GM10248 (cell line): ENCODE measurements at regions of chr13 and their contacts with region 1.

Region 1: GRCh38 chr13:75445717-75446499 is 36.1 kb downstream of the TBC1D4 start:
- DNase-seq: no peak
- CTCF ChIP-seq: no peak

Region 2: DNA sequence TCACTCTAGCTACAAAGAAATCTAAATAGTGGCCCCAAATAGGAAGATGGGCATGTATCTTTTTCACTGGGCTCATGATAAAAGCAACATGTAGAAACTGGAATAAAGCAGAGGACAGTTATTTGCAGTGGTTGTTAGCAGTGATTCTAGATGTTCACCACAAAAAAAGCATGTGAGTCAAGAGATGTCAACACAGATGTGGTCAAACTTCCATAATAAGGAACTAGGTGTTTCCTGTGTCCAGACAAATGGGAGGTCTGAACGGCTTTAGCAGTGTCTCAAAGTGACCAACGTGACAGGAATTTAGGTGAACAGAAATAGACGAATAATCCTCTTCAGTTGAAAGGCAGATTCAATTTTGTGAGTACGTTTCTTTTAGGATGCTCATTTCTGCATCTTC is 126.7 kb before region 1 on chr13:
- CTCF ChIA-PET with region 1: no interaction called
- POLR2A ChIA-PET with region 1: no interaction called
- DNase-seq: no peak
- CTCF ChIP-seq: no peak

Region 3: DNA sequence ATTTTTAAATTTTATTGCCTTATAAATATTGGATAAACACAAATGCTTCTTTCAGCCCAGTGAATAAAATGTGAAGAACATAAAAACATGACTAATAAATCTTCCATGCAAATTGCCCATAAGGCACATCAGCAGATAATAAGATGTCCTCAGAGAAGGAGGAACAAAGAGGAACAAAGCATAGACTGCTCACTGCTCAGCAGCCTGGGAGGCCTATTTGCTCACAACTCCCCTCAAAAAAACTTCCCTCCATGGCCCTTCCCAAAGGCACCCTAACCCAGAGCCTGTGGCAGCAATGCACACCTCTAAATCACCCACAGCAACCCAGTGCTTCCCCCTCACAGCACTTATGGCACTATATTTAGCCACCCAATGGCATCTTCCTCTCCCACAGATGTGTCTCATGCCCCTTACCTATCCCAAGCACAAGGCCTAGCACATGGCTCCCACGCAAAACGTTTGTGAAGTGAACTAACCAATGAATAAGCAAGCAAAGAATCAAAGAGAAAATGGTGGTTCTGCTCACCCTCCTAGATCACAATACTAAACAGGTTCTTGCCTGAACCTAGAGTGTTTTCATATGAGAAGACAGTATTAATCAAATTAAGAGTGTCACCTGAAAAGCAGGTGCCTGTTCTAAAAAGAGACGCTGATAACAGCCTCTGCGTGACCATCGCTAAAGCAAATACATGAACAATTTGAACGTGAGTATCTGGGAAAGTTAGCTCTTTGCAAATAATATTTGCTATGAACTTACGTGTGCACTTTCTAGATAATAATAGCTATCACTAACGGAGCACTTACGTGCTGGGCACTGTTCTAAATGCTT is 60.8 kb before region 1 on chr13:
- CTCF ChIA-PET with region 1: no interaction called
- POLR2A ChIA-PET with region 1: no interaction called
- DNase-seq: no peak
- CTCF ChIP-seq: no peak

Region 4: DNA sequence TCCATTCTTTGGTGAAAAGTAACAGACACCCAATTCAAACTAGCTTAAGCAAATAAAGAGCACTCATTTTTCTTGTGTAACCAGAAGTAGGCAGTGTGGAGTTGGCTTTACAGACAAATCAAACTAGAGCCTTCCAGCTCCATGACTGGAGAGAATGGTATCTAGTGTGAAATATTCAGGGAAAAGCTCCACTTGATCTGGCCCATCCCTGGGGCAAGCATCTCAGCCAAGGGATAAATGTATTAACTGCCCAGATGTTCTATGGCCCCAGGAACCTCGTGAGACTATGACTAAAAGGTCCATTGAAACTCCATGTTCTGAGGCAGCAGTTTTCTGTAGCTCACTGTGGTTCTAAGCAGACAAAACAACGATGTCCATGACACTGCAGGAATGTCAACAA is 13.9 kb before region 1 on chr13:
- CTCF ChIA-PET with region 1: interaction called, 15 read pairs
- POLR2A ChIA-PET with region 1: no interaction called
- DNase-seq: no peak
- CTCF ChIP-seq: peak; percentile 3

Region 5: GRCh38 chr13:75458696-75459422 is 13.0 kb after region 1 on chr13:
- CTCF ChIA-PET with region 1: interaction called, 10 read pairs
- POLR2A ChIA-PET with region 1: no interaction called
- DNase-seq: peak; percentile 64
- CTCF ChIP-seq: no peak

Region 6: DNA sequence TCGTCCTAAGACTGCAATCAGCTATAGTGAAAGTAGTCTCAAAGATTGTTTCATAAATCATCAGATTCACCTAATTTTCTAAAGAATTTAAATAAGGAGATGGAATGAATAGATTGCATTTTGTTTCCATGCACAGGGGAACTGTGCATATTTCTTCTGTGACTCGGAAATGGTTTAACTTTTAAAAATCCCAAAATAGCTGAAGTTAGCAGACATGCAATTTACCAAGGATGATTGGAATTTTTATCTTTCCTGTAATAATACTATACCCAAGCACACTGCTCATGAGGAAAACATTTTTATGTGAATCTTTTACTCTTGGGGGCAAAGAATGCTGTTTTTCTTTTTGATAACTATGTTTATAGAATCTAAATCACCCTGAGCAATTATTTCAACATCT is 175.2 kb after region 1 on chr13:
- CTCF ChIA-PET with region 1: no interaction called
- POLR2A ChIA-PET with region 1: no interaction called
- DNase-seq: no peak
- CTCF ChIP-seq: no peak